ENCODE measurements at regions of chr6 and their contacts with region 1.

Region 1: GRCh38 chr6:46234156-46234556 is 63.4 kb upstream of the ENPP5 start:
- DNase-seq: no peak
- H3K4me3 ChIP-seq: no peak overlapping the region
- H3K27ac ChIP-seq: no peak overlapping the region
- H3K4me1 ChIP-seq: no peaks in the 10 kb centered on the region
- H3K27me3 ChIP-seq: no peaks in the 10 kb centered on the region
- CTCF ChIP-seq: no peak

Region 2: DNA sequence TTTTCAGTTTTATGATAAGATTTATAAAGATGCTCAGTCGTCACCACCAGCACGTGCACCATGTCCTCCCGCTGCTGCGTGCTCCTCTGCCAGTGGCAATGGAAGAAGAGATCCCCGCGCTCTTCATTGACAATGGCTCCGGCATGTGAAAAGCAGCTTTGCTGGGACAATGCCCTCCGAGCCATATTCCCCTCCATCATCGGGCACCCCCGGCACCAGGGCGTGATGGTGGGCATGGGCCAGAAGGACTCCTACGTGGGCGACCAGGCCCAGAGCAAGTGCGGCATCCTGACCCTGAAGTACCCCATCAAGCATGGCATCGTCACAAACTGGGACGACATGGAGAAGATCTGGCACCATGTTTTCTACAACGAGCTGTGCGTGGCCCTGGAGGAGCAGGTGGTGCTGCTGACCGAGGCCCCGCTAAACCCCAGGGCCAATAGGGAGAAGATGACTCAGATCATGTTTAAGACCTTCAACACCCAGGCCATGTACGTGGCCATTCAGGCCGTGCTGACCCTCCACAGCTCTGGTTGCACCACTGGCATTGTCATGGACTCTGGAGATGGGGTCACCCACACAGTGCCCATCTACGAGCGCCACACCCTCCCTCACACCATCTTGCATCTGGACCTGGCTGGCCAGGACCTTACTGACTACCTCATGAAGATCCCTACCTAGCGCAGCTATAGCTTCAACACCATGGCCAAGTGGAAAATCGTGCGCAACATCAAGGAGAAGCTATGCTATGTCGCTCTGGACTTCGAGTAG is 29.1 kb before region 1 on chr6:
- CTCF ChIA-PET with region 1: interaction called, 10 read pairs
- POLR2A ChIA-PET with region 1: no interaction called
- intact Hi-C with region 1: no loop called
- DNase-seq: no peak
- H3K4me3 ChIP-seq: no peak overlapping the region
- H3K27ac ChIP-seq: no peak overlapping the region
- H3K4me1 ChIP-seq: no peaks in the 10 kb centered on the region
- H3K27me3 ChIP-seq: peaks cover 13% of the 10 kb centered on the region; the same call in 1 of the 2 replicates
- CTCF ChIP-seq: no peak

Region 3: GRCh38 chr6:46719099-46719498 is 484.9 kb after region 1 on chr6:
- CTCF ChIA-PET with region 1: no interaction called
- POLR2A ChIA-PET with region 1: no interaction called
- intact Hi-C with region 1: no loop called
- DNase-seq: peak; percentile 8 to 74
- H3K4me3 ChIP-seq: no peak overlapping the region
- H3K27ac ChIP-seq: no peak overlapping the region
- H3K4me1 ChIP-seq: no peaks in the 10 kb centered on the region
- H3K27me3 ChIP-seq: no peaks in the 10 kb centered on the region
- CTCF ChIP-seq: no peak